AG04449 (cell line): ENCODE measurements at regions of chr19 and their contacts with region 1.

Region 1: DNA sequence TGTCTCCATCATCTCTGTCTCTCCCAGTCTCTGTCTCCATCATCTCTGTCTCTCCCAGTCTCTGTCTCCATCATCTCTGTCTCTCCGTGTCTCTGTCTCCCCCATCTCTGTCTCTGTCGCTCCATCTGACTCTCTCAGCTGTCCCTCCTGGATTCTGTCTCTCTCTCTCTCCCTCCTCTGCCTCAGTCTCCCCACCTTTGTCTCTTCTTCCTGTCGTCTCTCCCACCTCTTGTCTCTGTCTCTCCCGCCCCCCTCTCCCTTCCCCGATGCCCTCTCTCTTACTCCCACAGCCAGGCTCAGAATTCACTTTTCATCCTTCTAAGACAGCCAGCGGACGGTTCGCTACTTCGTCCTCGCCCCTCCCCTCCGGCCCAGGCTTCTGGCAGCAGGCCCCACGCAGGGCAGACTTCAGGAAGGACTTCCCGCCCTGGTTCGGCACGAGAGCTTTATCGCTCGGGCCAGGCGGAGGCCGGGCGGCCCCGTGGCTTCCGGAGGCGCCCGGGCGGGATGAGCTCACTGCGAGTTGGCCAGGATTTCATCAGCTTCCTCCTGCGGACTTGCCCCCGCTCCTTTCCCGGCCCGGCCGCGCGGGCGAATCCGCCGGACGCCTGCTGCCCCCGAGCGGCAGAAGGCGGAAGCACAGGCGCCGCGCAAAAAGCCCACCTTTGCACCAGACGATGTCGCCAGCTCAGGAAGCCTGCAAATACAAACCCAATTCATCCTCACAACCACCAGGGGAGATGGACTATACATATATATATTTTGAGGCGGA is 12.4 kb upstream of the CCDC9 start:
- DNase-seq: peak; percentile 77
- H3K4me3 ChIP-seq: peak overlapping the region; percentile 57
- CTCF ChIP-seq: peak; percentile 97

Region 2: GRCh38 chr19:47112997-47113849 is 130.7 kb before region 1 on chr19 and contains the start of gene ZC3H4:
- CTCF ChIA-PET with region 1: interaction called, 16 read pairs
- POLR2A ChIA-PET with region 1: interaction called, 6 read pairs
- DNase-seq: peak; percentile 95
- H3K4me3 ChIP-seq: peak within 1 kb of the TSS; percentile 86
- CTCF ChIP-seq: no peak

Region 3: GRCh38 chr19:47157431-47158321 is 86.3 kb before region 1 on chr19:
- CTCF ChIA-PET with region 1: interaction called, 512 read pairs
- POLR2A ChIA-PET with region 1: interaction called, 9 read pairs
- DNase-seq: no peak
- H3K4me3 ChIP-seq: no peak overlapping the region
- CTCF ChIP-seq: no peak

Region 4: DNA sequence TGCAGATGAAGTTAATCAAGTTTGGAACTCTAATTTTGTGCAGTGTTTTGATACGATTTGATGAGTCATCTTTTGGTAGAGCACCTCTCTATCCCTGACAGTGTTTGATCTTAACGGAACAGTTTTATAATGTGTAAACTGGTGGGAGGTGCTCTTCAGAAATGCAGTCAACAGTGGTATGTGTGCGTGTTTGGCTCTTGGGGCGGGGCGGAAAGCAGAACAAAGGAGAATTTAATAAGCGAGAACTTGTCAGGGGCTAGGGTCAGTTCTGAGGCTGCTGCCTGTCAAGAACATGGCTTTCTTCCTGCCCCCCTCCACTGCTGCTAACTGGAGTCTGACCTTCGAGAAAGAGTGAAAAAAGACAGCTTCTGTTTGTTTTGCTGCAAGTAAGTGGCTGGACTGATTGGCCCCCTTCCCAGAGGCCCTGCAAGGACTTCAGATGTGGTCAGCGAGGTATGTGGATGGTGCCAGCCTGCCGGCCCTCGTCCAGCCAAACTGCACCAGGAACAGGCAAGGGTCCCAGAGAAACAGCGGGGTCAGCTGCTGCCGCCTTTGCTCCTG is 53.7 kb before region 1 on chr19:
- CTCF ChIA-PET with region 1: interaction called, 10 read pairs
- POLR2A ChIA-PET with region 1: no interaction called
- DNase-seq: peak; percentile 37
- H3K4me3 ChIP-seq: no peak overlapping the region; the same call in 1 of the 2 replicates
- CTCF ChIP-seq: no peak

Region 5: GRCh38 chr19:47225746-47226425 is 18.1 kb before region 1 on chr19:
- CTCF ChIA-PET with region 1: interaction called, 104 read pairs
- POLR2A ChIA-PET with region 1: interaction called, 79 read pairs
- DNase-seq: no peak
- H3K4me3 ChIP-seq: peak overlapping the region; percentile 95
- CTCF ChIP-seq: peak; percentile 32

Region 6: DNA sequence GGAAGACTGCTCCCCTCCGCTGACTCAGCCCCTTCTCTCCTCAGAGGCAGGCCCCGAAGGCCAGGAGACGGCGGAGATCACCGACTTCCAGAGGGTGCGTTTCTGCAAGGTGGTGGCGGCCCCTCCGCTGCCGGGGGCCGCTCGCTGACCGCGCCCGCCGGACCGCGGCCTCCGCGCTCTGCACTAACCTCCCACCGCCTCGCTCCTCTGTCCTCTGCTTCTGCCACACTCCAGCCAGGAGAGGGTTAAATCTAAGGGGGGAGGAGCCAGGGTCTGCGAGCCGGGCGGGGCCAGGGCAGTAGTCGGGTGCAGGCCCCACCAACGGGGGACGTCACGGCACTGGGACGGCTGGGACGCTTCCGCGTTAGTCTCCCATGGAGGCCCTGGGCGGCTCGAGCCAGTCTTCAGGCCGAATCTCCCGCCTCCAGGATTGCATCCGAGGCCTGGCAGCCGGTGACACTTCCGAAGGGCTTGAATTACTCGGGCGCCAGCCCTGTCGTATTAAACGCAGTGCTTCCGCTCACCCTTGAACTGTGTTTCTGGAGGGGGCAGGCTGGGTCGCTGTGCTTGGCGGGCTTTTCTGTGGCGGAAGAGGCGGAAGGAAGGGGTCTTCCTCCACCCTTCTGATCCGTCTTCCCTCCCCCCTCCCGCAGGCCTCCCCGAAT is 29.5 kb after region 1 on chr19:
- CTCF ChIA-PET with region 1: interaction called, 26 read pairs
- POLR2A ChIA-PET with region 1: no interaction called
- DNase-seq: peak; percentile 46
- H3K4me3 ChIP-seq: peak overlapping the region; percentile 66
- CTCF ChIP-seq: no peak